ENCODE measurements at regions of chr1 and their contacts with region 1.

Region 1: GRCh38 chr1:37449936-37450335 is 24.4 kb upstream of the ZC3H12A start:
- DNase-seq: no peak
- ATAC-seq: no peak

Region 2: GRCh38 chr1:37486680-37487618 is 37.0 kb after region 1 on chr1:
- intact Hi-C with region 1: loop called in 1 of 2 experiments (anchors 2 kb)
- DNase-seq: peak; percentile 69 to 84
- ATAC-seq: peak; percentile 78